Activated CD4-positive, alpha-beta T cell treated with anti-CD3 and anti-CD28 coated beads, Interleukin-2, amount 10 ng/mL, durations not matched to agents 24 days and 14 days (primary cell): ENCODE measurements at regions of chr12 and their contacts with region 1.

Region 1: DNA sequence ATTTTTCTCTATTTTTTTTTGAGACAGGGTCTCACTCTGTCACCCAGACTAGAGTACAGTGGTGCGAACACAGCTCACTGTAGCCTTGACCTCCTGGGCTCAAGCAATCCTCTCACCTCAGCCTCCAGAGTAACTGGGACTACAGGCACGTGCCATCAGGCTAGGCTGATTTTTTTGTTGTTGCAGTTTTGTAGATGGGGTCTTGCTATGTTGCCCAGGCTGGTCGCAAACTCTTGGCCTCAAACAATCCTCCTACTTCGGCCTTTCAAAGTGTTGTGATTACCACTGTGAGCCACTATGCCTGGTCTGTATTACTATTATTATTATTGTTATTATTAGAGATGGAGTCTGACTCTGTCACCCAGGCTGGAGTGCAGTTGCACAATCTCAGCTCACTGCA is 23.3 kb downstream of the GIT2 start:
- DNase-seq: no peak
- H3K4me3 Mint-ChIP-seq: no peak overlapping the region
- H3K27ac Mint-ChIP-seq: no peak overlapping the region
- H3K4me1 Mint-ChIP-seq: peaks cover 19% of the 10 kb centered on the region
- H3K27me3 Mint-ChIP-seq: no peaks in the 10 kb centered on the region

Region 2: DNA sequence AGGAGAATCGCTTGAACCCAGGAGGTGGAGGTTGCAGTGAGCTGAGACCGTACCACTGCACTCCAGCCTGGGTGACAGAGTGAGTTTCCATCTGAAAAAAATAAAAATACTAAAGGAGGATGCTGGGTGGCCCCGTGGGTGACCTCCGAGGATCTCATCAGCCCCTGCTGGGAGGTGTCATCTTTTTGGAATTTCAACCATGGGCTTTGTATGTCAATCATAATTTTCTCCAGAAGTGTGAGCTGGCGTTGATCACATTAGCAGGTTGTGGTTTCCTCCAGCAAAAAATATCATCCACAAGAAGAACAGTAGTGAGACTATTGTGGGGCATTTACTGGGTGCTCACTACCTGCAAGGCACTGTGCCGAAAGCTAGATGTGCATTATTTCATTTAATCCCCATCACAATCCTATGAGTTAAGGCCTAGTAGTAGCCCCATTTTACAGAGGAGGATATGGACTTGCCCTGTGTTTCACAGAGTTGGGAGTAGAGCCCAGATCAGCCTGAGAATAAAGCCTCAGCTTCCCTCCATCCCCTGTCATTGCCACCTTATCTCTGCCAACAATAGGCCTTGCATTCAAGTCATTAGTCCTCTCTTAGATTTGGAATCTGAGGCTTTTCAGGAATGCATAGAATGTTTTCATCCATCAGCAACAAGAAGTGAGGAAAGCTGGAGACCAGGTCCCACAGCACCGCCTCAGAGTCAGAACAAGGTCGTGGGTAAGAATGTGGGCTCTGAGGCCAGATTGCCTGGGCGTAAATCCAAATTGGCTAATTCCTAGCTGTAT is 991.8 kb before region 1 on chr12:
- intact Hi-C with region 1: no loop called
- DNase-seq: no peak
- H3K4me3 Mint-ChIP-seq: no peak overlapping the region
- H3K27ac Mint-ChIP-seq: no peak overlapping the region
- H3K4me1 Mint-ChIP-seq: no peaks in the 10 kb centered on the region
- H3K27me3 Mint-ChIP-seq: no peaks in the 10 kb centered on the region

Region 3: DNA sequence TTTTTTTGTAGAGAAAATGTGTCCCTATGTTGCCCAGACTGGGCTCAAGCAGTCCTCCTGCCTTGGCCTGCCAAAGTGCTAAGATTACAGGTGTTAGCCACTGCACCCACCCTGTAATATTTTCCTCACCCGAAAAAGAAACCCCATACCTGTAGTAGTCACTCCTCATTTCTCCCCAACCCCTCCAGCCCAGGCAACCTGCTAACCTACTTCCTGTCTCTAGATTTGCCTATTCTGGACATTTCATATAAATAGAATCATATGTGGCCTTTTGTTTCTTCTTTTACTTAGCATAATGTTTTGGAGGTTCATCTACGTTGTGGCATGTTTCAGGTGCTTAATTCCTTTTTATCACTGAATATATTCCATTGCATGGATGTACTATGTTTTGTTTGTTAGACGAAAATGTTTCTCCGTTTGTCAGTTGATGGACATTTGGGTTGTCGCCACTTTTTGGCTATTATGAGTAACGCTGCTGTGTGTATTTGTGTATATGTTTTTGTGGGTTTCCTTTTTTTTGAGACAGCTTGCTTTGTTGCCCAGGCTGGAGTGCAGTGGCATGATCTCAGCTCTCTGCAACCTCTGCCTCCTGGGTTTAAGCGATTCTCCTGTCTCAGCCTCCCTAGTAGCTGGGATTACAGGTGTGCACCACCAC is 32.6 kb after region 1 on chr12:
- intact Hi-C with region 1: loop called (anchors 5 kb)
- DNase-seq: no peak
- H3K4me3 Mint-ChIP-seq: peak overlapping the region; percentile 38
- H3K27ac Mint-ChIP-seq: peak overlapping the region; percentile 71
- H3K4me1 Mint-ChIP-seq: peaks cover 45% of the 10 kb centered on the region
- H3K27me3 Mint-ChIP-seq: no peaks in the 10 kb centered on the region

Region 4: DNA sequence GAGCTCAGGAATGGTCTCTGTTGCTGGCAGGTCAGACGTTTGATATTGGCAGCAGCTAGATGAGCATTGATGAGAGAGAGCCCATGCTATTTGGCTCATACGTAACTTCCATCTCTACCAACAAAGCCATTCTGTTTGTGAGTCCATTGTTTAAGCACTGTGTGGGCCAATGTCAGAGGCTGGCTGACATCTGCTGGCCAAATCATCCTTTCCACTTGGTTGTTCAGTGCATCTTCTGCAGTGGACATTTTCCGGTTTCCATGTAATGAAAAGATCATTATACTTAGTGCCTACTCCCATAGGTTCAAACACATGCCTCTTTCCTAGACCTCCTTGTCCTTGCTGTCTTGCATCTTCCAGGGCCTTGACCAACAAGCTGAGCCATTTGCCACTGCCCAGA is 210.6 kb after region 1 on chr12:
- intact Hi-C with region 1: no loop called
- DNase-seq: no peak
- H3K4me3 Mint-ChIP-seq: no peak overlapping the region
- H3K27ac Mint-ChIP-seq: no peak overlapping the region
- H3K4me1 Mint-ChIP-seq: no peaks in the 10 kb centered on the region
- H3K27me3 Mint-ChIP-seq: no peaks in the 10 kb centered on the region